ENCODE measurements at regions of chr15 and their contacts with region 1.

Region 1: GRCh38 chr15:99704444-99704838 is 28.8 kb downstream of the LYSMD4 start:
- DNase-seq: peak in 2 of 5 donors; percentile 39 to 57
- ATAC-seq: peak; percentile 71 to 79 (median 76)
- H3K4me3 ChIP-seq: peak overlapping the region in 1 of 12 donors; percentile 8
- H3K27ac ChIP-seq: peak overlapping the region; percentile 21 to 87 (median 80)
- H3K4me1 ChIP-seq: peaks cover 3 to 69% (median 45%) of the 10 kb centered on the region in 12 donors
- H3K27me3 ChIP-seq: no peaks in the 10 kb centered on the region
- CTCF ChIP-seq: peak; percentile 66 to 85 (median 80)
- POLR2A ChIP-seq: no peak

Region 2: DNA sequence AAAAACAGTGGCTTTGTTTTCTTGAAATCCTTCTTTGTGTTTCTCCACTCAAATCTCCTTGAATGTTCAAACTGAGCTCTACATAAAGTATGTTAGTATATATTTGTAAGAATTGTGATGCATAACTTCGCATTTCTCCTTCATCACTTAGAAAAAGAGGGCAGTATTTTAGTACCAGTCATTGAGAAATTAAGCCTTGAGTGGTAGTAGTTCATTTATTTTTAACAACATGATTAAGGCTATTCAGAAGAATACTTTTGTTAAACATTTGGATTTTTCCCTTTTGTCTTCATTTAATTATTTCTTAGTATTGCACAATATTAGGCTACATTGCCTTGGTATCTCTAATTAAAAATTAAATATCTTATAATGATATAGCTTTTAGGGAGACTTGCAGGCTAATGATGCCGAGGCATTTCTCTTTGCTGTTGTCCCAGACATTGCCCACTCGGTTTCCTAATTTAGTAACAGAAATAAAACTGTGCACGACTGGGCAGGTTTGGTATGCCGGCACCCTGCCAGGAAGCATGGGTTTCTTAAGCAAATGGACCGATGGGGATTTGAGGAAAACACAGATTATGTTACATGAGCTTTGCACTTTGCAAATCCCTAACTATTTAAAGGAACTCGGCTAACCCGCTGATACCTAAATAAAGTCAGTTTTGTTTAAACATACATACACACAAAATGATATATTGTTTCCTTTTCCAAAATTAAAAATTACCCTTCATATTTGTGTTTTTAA is 398.5 kb before region 1 on chr15:
- intact Hi-C with region 1: loop called in 1 of 10 experiments (anchors 5 kb)
- DNase-seq: peak; percentile 55 to 75 (median 61)
- ATAC-seq: peak; percentile 59 to 75 (median 64)
- H3K4me3 ChIP-seq: peak overlapping the region in 7 of 12 donors; percentile 4 to 30 (median 22)
- H3K27ac ChIP-seq: peak overlapping the region in 11 of 12 donors; percentile 15 to 84 (median 56)
- H3K4me1 ChIP-seq: peaks cover 0 to 24% (median 6%) of the 10 kb centered on the region in 12 donors
- H3K27me3 ChIP-seq: no peaks in the 10 kb centered on the region
- CTCF ChIP-seq: no peak
- POLR2A ChIP-seq: no peak

Region 3: DNA sequence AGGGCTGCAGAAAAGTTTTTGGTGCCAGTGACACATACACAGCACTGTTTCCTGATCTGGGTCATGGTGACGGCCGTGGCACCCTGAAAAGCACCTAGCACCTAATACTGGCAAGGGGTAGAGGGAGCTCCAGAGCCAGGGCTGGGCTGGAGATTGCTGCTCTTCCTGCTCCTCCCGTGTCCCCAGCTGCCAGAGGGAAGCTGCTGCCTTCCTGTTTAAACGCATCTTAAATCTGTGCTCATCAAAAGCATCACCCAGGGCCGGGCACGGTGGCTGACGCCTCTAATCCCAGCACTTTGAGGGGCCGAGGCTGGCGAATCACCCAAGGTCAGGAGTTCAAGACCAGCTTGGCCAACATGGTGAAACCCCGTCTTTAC is 295.4 kb before region 1 on chr15:
- intact Hi-C with region 1: loop called in 7 of 10 experiments (anchors 2 to 10 kb)
- DNase-seq: peak; percentile 71 to 82 (median 79)
- ATAC-seq: peak; percentile 87 to 94 (median 88)
- H3K4me3 ChIP-seq: no peak overlapping the region
- H3K27ac ChIP-seq: peak overlapping the region in 10 of 12 donors; percentile 6 to 71 (median 42)
- H3K4me1 ChIP-seq: peaks cover 0 to 26% (median 22%) of the 10 kb centered on the region in 12 donors
- H3K27me3 ChIP-seq: no peaks in the 10 kb centered on the region
- CTCF ChIP-seq: peak; percentile 51 to 74 (median 66)
- POLR2A ChIP-seq: no peak

Region 4: DNA sequence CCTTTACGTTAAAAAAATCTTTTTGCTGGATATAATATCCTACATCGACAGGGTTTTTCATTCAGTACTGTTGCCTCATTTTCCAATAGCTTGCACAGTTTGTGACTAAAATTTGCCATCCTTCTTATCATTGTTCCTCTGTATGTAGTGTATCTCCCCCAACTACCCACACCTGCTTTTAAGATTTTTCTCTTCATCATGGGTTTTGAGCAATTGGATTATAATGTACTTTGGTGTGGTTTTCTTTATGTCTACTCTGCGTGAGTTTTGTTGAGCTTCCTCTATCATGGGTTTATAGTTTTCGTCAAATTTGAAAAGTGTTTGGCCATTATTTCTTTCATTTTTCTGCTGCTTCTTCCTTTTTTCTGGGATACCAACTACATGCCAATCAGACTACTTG is 178.3 kb before region 1 on chr15:
- intact Hi-C with region 1: no loop called
- DNase-seq: no peak
- ATAC-seq: no peak
- H3K4me3 ChIP-seq: no peak overlapping the region
- H3K27ac ChIP-seq: no peak overlapping the region
- H3K4me1 ChIP-seq: no peaks in the 10 kb centered on the region
- H3K27me3 ChIP-seq: no peaks in the 10 kb centered on the region
- CTCF ChIP-seq: no peak
- POLR2A ChIP-seq: no peak

Region 5: GRCh38 chr15:99845009-99845408 is 140.6 kb after region 1 on chr15:
- intact Hi-C with region 1: no loop called
- DNase-seq: no peak
- ATAC-seq: no peak
- H3K4me3 ChIP-seq: no peak overlapping the region
- H3K27ac ChIP-seq: no peak overlapping the region
- H3K4me1 ChIP-seq: no peaks in the 10 kb centered on the region
- H3K27me3 ChIP-seq: no peaks in the 10 kb centered on the region
- CTCF ChIP-seq: no peak
- POLR2A ChIP-seq: no peak